ENCODE measurements at regions of chr15 and their contacts with region 1.

Region 1: GRCh38 chr15:78750566-78750965 is 60.7 kb downstream of the ADAMTS7 start:
- DNase-seq: no peak
- ATAC-seq: no peak
- H3K4me3 Mint-ChIP-seq: peak overlapping the region; percentile 33
- H3K27ac Mint-ChIP-seq: no peak overlapping the region
- H3K4me1 Mint-ChIP-seq: peaks cover 4% of the 10 kb centered on the region
- H3K27me3 Mint-ChIP-seq: no peaks in the 10 kb centered on the region

Region 2: GRCh38 chr15:78540141-78540928 is 210.2 kb before region 1 on chr15 and contains the start of gene PSMA4:
- CTCF ChIA-PET with region 1: no interaction called
- POLR2A ChIA-PET with region 1: no interaction called
- intact Hi-C with region 1: loop called in 1 of 2 experiments (anchors 1 kb)
- DNase-seq: peak; percentile 96
- ATAC-seq: peak; percentile 86
- H3K4me3 Mint-ChIP-seq: peak within 1 kb of the TSS; percentile 91
- H3K27ac Mint-ChIP-seq: peak within 1 kb of the TSS; percentile 98
- H3K4me1 Mint-ChIP-seq: peaks cover 27% of the 10 kb centered on the region
- H3K27me3 Mint-ChIP-seq: no peaks in the 10 kb centered on the region
- total RNA-seq, gene PSMA4: 273 to 312 TPM

Region 3: DNA sequence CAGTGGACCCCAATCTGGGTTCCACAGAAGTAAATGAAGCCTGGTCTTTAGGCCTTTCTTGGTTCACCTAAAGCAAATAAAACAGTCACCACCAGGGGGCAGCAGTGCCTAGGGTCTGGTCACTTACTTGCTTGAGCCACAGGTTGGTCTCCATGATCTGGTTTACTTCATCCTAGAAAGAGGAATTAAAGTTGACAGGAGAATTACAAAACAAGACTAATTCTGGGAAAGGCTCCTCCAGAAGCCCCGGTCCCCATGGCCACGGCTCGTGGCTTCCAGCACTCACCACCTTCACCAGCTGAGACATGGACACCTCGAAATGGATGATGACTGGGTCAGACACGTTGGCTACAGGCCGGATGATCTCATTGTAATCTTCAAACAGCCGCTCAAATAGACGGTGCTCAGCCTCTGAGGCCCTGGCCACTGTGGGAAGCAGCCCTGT is 132.1 kb before region 1 on chr15:
- CTCF ChIA-PET with region 1: no interaction called
- POLR2A ChIA-PET with region 1: no interaction called
- intact Hi-C with region 1: loop called (anchors 1 kb)
- DNase-seq: peak; percentile 90
- ATAC-seq: peak; percentile 49
- H3K4me3 Mint-ChIP-seq: no peak overlapping the region
- H3K27ac Mint-ChIP-seq: no peak overlapping the region
- H3K4me1 Mint-ChIP-seq: peaks cover 11% of the 10 kb centered on the region
- H3K27me3 Mint-ChIP-seq: peaks cover 33% of the 10 kb centered on the region

Region 4: GRCh38 chr15:78638658-78639314 is 111.8 kb before region 1 on chr15:
- CTCF ChIA-PET with region 1: interaction called, 6 read pairs
- POLR2A ChIA-PET with region 1: interaction called, 3 read pairs
- intact Hi-C with region 1: loop called in 1 of 2 experiments (anchors 1 kb)
- DNase-seq: peak; percentile 78
- ATAC-seq: peak; percentile 65
- H3K4me3 Mint-ChIP-seq: no peak overlapping the region
- H3K27ac Mint-ChIP-seq: no peak overlapping the region
- H3K4me1 Mint-ChIP-seq: peaks cover 8% of the 10 kb centered on the region
- H3K27me3 Mint-ChIP-seq: peaks cover 19% of the 10 kb centered on the region

Region 5: DNA sequence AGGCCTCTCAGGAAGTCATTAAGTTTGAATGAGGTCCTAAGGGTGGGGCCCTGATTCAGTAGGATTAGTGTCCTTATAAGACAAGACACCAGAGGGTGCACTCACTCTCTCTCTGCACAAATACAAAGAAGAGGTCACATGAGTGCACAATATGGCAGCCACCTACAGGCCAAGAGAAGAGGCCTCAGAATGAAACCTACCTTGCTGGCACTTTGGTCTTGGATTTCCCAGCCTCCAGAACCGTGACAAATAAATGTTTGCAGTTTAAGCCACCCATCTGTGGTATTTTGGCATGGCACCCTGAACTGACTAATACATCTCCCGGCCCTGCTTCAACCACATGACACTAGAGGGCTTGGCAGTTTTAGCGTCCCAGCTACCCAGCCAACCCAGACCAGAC is 35.7 kb before region 1 on chr15:
- CTCF ChIA-PET with region 1: interaction called, 5 read pairs
- POLR2A ChIA-PET with region 1: no interaction called
- intact Hi-C with region 1: loop called in 1 of 2 experiments (anchors 2 kb)
- DNase-seq: peak; percentile 46
- ATAC-seq: peak; percentile 85
- H3K4me3 Mint-ChIP-seq: no peak overlapping the region
- H3K27ac Mint-ChIP-seq: no peak overlapping the region
- H3K4me1 Mint-ChIP-seq: peaks cover 10% of the 10 kb centered on the region
- H3K27me3 Mint-ChIP-seq: peaks cover 20% of the 10 kb centered on the region

Region 6: DNA sequence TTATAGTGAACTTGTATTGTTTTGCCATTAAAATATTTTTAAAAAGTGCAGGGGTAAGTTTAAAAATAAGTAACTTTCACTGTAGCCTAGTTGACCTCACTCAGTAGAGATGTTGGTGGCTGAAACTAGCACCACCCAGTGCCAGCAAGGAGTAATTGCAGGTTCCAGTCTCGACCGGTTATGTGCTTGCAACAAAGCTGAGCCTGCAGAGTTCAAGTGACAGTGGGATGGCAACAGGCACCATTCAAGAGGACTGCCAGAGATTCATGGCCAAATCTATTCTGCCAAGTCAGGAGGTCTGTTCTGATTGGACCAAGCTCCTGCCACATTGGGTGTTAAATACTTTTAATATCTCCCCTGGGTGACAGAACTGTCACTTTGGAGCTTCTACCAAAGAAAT is 58.0 kb after region 1 on chr15:
- CTCF ChIA-PET with region 1: interaction called, 6 read pairs
- POLR2A ChIA-PET with region 1: no interaction called
- intact Hi-C with region 1: loop called in 1 of 2 experiments (anchors 5 kb)
- DNase-seq: peak; percentile 54
- ATAC-seq: peak; percentile 72
- H3K4me3 Mint-ChIP-seq: no peak overlapping the region
- H3K27ac Mint-ChIP-seq: no peak overlapping the region
- H3K4me1 Mint-ChIP-seq: peaks cover 11% of the 10 kb centered on the region
- H3K27me3 Mint-ChIP-seq: peaks cover 32% of the 10 kb centered on the region

Measured in activated CD4-positive, alpha-beta T cell treated with anti-CD3 and anti-CD28 coated beads for 36 hours (primary cell).